ENCODE measurements at regions of chr17 and their contacts with region 1.

Region 1: DNA sequence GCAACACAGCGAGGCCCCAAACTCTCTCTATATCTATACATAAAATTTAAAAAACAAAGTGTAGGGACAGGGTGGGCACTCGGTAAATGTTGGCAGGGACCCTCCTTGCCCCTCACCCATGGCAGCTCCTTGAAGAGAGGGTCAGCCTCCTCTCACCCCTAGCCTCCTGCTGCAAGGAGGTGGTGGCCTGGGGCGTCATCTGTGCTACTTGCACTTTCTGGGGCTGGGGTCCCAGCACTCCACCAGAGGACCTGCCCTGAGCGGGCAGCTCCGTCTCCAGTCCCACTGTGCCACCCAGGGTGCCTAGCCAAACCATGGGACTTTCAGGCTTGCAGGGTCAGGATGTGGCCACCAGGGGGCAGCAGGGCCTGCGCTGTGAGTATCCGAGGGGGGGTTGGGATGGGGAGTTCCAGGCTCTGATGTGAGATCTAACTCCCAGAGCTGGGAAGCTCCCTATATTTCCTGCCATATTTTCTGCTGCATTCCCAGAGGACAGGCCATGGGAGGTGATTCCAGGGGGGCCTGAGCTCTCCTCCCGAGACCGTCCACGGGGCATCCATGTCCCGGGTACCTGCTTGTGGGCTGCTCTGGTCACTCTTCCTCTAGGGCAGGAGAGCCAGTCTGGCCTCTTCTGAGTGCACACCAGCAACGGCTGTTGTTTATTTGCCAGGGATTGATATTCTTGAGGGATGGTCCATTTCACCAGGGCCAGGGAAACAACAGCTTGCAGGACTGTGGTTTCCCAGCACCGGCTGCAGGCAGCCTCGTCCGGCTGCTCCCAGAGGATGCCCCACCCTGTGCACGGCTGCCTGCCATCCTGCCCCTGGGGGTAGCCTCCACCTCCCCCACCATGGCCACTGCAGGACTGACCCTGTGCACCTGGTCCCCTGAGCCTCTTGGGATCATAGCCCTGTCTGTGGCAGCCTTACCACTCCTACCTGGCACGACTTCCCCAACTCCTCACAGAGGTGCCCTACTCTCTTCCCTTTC is 1.1 kb downstream of the GPR142 start:
- DNase-seq: peak; percentile 84
- ATAC-seq: peak; percentile 88
- H3K4me3 ChIP-seq: no peak overlapping the region
- H3K27ac ChIP-seq: no peak overlapping the region
- H3K4me1 ChIP-seq: 0 out of 2 replicates have a peak, but pooled peaks cover 4% of the 10 kb centered on the region
- H3K27me3 ChIP-seq: 0 out of 2 replicates have a peak, but pooled peaks cover 6% of the 10 kb centered on the region
- CTCF ChIP-seq: peak; percentile 98

Region 2: DNA sequence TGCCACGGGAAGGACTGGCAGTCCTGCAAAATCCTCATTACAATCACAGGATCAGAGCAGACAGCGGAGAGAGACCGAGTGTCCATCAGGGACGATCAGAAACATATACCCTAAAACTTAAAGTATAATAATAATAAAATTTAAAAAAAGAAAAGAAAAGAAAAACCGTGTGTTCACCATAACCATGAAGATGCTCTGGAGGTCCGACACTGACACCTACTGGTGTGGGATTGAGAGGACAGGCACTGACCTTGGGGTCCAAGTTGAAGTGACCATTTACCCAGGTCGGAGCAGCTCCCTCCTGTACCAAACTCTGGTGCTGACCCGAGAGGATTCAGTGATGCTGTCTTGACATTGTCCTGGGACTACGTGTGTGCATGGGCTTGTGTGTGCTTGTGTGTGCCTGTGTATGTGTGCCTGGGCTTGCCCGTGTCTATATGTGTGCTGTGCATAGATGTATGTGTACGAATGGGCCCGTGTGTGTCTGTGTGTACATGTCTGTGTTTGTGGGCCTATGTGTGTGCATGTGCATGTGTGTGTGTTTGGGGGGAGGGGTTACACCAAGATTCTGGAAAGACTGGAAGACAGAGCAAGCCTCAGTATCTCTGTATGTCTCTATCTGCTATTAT is 233.7 kb after region 1 on chr17:
- CTCF ChIA-PET with region 1: interaction called, 3 read pairs
- POLR2A ChIA-PET with region 1: no interaction called
- intact Hi-C with region 1: loop called (anchors 5 kb)
- DNase-seq: peak; percentile 73
- ATAC-seq: peak; percentile 63
- H3K4me3 ChIP-seq: no peak overlapping the region
- H3K27ac ChIP-seq: no peak overlapping the region
- H3K4me1 ChIP-seq: peaks cover 8% of the 10 kb centered on the region
- H3K27me3 ChIP-seq: peaks cover 53% of the 10 kb centered on the region
- CTCF ChIP-seq: peak; percentile 76

Measured in PC-3 (cell line).